PC-9 (cell line): ENCODE measurements at regions of chr21 and their contacts with region 1.

Region 1: DNA sequence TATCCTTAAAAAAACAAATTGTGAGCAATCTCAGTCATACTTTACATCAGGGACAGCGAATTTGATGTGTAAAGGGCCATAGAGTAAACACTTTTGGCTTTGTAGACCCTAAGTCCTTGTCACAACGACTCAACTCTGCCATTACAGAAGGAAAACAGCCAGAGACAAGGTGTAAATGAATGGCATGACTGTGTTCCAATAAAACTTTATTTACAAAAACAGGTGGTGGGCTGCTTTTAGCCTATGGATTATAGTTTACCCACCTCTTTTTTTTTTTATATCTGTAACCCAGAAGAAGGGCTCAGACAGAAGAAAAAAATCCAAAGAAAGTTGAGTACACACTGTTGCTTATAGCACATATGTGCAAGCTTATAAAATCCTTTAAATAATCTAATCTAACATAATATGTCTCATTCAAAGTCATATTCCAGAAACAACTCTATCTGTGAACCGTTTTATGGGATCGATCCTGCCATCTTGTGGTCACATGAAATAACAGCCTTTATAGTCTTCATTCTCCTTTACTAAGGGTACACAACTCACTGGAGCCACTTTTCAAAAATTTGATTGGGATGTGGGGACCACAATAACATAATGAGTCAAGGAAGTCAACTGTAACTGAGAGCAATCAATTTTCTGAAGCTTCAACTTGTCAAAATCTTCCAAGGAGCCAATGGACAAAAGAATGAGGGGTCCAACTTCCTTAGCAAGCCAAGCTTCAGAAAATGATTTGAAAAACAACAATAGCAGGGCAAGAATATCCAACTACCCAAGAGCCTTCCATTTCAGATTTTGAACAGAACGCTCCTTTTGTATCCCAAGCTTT is 142.2 kb upstream of the KRTAP19-8 start:
- DNase-seq: no peak
- H3K4me3 ChIP-seq: no peak overlapping the region
- H3K27ac ChIP-seq: no peak overlapping the region
- H3K4me1 ChIP-seq: no peaks in the 10 kb centered on the region
- H3K27me3 ChIP-seq: no peaks in the 10 kb centered on the region
- CTCF ChIP-seq: peak; percentile 60

Region 2: GRCh38 chr21:29568020-29568697 is 1612.3 kb before region 1 on chr21:
- CTCF ChIA-PET with region 1: interaction called, 14 read pairs
- POLR2A ChIA-PET with region 1: no interaction called
- intact Hi-C with region 1: no loop called
- DNase-seq: no peak
- H3K4me3 ChIP-seq: no peak overlapping the region
- H3K27ac ChIP-seq: no peak overlapping the region
- H3K4me1 ChIP-seq: no peaks in the 10 kb centered on the region
- H3K27me3 ChIP-seq: no peaks in the 10 kb centered on the region
- CTCF ChIP-seq: no peak

Region 3: GRCh38 chr21:29825345-29825744 is 1355.1 kb before region 1 on chr21:
- CTCF ChIA-PET with region 1: interaction called, 12 read pairs
- POLR2A ChIA-PET with region 1: no interaction called
- intact Hi-C with region 1: no loop called
- DNase-seq: no peak
- H3K4me3 ChIP-seq: no peak overlapping the region
- H3K27ac ChIP-seq: no peak overlapping the region
- H3K4me1 ChIP-seq: no peaks in the 10 kb centered on the region
- H3K27me3 ChIP-seq: no peaks in the 10 kb centered on the region
- CTCF ChIP-seq: no peak

Region 4: DNA sequence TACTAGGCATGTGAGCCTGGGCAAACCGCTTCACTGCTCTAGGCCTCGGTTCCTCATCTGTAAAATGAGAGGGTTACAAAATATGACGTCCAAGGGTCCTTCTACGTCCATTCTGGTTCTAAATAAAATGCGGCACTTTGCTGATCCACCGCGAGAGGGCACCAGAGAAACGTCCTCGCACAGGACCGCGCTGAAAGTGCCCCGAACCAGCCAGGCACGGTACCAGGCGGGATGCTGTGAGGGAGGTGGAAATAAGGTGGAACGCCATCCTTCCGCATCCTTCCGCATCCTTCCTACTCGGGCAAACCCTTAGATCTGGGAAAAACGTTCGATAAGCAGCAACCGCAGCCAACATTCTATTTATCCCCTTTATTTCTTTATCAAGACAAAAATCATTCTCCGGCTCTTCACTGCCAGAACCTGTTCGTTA is 81.9 kb before region 1 on chr21:
- CTCF ChIA-PET with region 1: interaction called, 8 read pairs
- POLR2A ChIA-PET with region 1: no interaction called
- intact Hi-C with region 1: loop called (anchors 2 kb)
- DNase-seq: peak in 1 of 2 experiments; percentile 43
- H3K4me3 ChIP-seq: no peak overlapping the region
- H3K27ac ChIP-seq: no peak overlapping the region
- H3K4me1 ChIP-seq: no peaks in the 10 kb centered on the region
- H3K27me3 ChIP-seq: no peaks in the 10 kb centered on the region
- CTCF ChIP-seq: peak; percentile 74

Region 5: GRCh38 chr21:31408301-31409088 is 228.0 kb after region 1 on chr21:
- CTCF ChIA-PET with region 1: no interaction called
- POLR2A ChIA-PET with region 1: no interaction called
- intact Hi-C with region 1: no loop called
- DNase-seq: no peak
- H3K4me3 ChIP-seq: no peak overlapping the region
- H3K27ac ChIP-seq: no peak overlapping the region
- H3K4me1 ChIP-seq: no peaks in the 10 kb centered on the region
- H3K27me3 ChIP-seq: no peaks in the 10 kb centered on the region
- CTCF ChIP-seq: no peak

Region 6: DNA sequence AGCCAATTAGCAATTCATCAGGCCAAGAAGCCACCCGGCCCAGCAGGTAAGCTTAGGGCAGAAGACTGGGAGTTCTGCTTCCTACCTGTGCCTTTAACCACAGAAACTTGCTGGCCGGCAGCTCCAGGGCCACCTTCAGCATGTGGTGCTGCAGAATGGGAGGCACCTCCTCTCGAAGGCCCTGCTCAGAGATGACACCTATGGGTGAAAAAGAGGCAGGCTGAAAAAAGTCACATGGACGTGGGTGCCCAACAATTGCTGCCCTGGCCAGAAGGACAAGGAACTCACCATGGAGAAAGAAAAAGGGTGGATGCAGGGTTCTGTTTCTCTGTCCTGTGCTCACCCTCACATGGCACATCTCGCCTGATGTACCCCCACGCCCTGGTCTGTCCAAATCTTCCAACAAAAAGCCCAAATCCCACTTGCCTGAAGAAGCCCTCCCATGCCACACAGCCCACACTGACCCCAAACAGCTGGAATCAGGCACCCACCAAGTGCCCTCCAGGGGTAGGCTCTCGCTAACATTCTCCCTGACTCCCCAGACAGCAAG is 1179.3 kb after region 1 on chr21:
- CTCF ChIA-PET with region 1: no interaction called
- POLR2A ChIA-PET with region 1: no interaction called
- intact Hi-C with region 1: no loop called
- DNase-seq: no peak
- H3K4me3 ChIP-seq: no peak overlapping the region
- H3K27ac ChIP-seq: no peak overlapping the region
- H3K4me1 ChIP-seq: no peaks in the 10 kb centered on the region
- H3K27me3 ChIP-seq: no peaks in the 10 kb centered on the region
- CTCF ChIP-seq: peak; percentile 23; the same call in 1 of the 2 replicates